Right ventricle myocardium superior (tissue), 1 donor: ENCODE measurements at regions of chr1 and their contacts with region 1.

Region 1: GRCh38 chr1:43529206-43529731 is 1.4 kb upstream of the PTPRF start:
- DNase-seq: peak; percentile 88
- ATAC-seq: peak; percentile 80

Region 2: DNA sequence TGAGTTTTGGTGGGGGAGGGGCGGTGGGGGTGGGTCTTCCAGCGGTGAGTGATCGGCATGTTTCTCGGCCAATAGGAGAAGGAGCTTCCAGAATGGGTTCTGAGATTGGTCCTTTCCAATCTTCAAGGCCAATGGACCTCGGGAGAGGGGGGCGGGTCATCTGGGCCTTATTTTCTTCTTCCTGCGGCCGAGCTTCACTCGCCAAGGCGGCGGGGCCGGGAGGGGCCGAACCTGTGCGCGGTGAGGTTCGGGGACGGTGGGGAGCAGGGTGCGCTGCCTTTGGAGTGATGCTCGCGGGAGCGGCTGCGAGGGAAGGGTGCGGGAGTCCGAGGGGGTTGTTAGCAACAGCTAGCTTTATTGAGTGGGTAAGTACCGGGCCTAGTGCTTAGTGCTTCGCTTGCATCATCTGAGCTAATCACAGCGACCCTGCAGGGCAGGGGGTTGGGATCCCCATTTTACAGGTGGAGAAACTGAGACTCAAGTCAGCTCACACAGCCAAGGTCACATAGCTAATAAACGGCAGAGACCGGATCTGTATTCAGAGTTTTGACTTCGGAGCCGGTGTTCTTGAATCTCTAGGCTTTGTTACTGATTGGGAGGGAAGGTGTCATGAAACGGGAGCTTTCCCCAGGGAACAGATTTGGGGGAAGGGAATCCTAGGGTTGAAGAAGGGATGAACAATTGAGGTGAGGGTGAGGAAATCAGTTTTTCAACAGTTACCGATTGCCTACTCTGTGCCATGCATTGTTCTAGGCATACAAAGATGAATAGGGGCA is 121.2 kb after region 1 on chr1:
- intact Hi-C with region 1: loop called (anchors 10 kb)
- DNase-seq: peak; percentile 94
- ATAC-seq: peak; percentile 93

Region 3: GRCh38 chr1:43822040-43822439 is 292.8 kb after region 1 on chr1:
- intact Hi-C with region 1: no loop called
- DNase-seq: no peak
- ATAC-seq: peak; percentile 43

Region 4: DNA sequence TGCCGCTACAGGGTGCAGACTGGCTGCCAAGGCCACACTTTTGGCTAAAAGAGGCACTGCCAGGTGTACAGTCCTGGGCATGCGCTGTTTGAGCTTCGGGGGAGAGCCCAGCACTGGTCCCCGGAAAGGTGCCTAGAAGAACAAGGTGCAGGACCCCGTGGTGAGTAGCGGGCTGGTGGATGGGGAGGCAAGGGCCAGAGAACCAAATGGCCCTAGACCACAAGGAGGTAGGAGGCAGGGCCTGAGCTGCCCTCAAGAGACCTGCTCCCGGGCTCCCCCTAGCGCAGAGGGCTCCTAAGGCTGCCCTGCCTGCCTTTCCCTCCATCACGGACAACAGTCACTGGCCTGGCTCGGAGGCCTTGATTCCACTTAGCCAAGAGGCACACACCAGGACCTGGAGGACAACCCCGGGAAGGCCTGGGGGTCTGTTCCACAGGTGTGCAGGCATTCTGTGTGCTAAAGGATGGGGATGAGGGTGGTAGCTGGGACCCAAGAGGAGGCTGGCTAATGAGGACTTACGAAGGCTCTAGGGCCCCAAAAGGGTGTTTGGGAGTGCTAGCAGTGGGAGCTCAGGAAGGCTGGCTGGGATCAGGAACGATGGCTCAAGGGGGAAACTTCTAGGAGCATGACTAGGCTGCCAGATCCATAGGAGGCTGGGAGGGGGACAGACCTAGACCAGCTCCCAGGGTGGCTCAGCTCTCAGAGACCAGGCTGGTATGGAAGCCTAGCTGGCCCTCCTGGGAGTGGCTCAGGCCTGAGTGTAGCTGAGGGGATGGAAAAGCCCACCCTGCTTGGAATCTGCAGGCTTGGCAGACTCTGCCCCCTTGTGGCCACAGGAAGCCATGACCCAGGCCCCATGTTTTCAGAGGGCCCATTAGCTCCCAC is 405.1 kb after region 1 on chr1:
- intact Hi-C with region 1: loop called (anchors 10 kb)
- DNase-seq: peak; percentile 74
- ATAC-seq: peak; percentile 62

Region 5: GRCh38 chr1:44049839-44050238 is 520.6 kb after region 1 on chr1:
- intact Hi-C with region 1: loop called (anchors 5 kb)
- DNase-seq: no peak
- ATAC-seq: no peak